Uterus (tissue), 4 donors: ENCODE measurements at regions of chr7 and their contacts with region 1.

Region 1: GRCh38 chr7:74709880-74710671 is 52.6 kb downstream of the GTF2I start:
- DNase-seq: no peak
- H3K4me3 ChIP-seq: no peak overlapping the region
- H3K27ac ChIP-seq: no peak overlapping the region
- H3K4me1 ChIP-seq: no peaks in the 10 kb centered on the region
- H3K27me3 ChIP-seq: no peaks in the 10 kb centered on the region
- CTCF ChIP-seq: no peak
- POLR2A ChIP-seq: no peak

Region 2: DNA sequence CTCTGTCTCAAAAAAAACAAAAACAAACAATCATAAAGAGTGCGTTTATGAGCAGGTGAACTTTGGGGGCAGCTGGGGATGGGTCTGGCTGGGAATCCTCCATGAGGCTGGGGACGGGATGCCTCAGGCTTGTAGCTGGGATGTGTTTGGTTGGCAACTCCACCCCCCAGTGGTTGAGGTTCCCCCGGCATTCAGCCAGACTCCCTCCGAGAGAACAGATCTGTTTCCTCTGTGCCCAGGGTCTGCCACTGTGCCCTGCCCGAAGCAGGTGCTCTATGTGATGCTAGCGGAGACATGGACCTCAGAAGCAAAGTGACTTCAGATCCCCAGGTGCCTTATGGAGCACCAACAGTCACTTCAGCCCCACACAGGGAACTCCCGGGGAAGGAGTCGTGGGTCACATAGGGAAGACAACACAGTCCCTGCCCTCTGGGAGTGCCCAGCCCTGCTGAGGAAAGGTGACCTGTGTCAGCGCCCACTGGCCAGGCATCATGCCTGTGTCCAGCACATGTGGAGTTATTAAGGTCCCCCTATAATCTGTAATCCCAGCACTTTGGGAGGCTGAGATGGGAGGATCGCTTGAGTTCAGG is 285.7 kb before region 1 on chr7:
- intact Hi-C with region 1: loop called (anchors 5 kb)
- DNase-seq: no peak
- H3K4me3 ChIP-seq: no peak overlapping the region
- H3K27ac ChIP-seq: no peak overlapping the region
- H3K4me1 ChIP-seq: no peaks in the 10 kb centered on the region
- H3K27me3 ChIP-seq: no peaks in the 10 kb centered on the region
- CTCF ChIP-seq: no peak
- POLR2A ChIP-seq: no peak